ENCODE measurements at regions of chr9 and their contacts with region 1.

Region 1: DNA sequence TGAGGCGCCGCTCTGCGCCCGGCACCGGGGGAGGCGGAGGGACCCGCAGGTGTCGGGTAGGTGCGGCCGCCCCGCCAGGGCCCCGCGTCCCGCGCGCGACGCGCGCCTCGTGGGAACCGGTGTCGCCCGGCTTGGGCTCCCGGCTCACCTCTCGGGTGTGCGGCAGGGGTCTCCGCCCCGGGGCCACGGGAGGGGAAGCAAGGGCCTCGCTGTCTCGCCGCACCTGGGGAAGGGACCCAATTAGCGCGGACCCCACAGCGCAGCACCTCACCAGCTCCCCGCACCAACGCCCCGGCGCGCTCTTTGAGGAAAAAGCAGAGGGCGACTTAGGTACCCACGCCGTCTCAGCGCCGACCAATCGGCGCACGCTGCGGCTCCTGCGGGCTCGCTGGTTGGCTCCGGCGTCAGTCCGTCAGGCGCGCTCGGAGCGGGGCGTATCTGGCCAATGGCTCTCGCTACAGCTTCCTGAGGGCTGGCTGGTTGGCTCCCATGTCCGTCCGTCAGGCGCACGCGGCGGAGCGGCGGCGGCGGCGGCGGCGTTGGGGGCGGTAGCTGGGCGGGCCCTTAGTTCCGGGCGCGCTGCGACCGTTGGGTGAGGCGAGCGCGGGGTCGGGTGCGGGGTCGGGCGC is at the start of gene TRAF2:
- DNase-seq: peak; percentile 98
- H3K4me3 Mint-ChIP-seq: peak within 1 kb of the TSS; percentile 91
- H3K27ac Mint-ChIP-seq: peak within 1 kb of the TSS; percentile 81
- H3K4me1 Mint-ChIP-seq: peaks cover 52% of the 10 kb centered on the region
- H3K27me3 Mint-ChIP-seq: no peaks in the 10 kb centered on the region
- total RNA-seq, gene TRAF2: 43.6 to 45.7 TPM

Region 2: DNA sequence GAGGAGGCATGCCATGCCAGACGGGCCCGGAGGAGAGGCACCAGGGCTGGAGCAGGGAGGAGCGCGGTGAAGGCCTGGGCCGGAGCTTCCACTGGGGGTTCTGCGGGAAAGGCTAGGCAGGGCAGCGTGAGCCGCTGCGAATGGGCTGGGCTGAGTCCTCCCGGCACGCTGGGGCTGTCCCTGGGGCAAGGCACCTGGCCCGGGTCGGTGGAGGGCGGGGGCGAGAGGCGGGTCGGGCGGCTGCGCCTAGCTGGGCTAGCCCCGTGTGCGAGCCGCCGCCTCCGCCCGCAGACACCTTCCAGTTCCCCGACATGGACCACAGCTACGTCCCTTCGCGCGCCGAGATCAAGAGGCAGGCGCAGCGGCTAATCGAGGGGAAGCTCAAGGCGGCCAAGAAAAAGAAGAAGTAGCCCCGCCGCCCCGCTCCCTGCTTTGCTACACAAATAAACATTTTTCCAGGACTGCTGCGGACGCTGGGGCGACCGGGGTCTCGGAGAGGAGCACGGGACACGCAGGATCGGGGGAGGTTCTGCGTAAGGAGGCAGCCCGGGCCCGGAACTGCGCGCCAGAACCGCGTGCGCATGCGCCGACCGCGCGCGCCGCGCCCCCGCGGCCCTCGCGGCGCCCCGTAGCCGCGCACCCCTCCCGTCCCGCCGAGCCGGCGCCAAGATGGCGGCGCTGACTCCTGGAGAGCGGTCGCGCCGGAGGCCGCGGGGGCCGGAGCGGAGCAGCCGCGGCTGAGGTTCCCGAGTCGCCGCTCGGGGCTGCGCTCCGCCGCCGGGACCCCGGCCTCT is 78.6 kb before region 1 on chr9 and contains the start of gene RABL6:
- CTCF ChIA-PET with region 1: no interaction called
- POLR2A ChIA-PET with region 1: interaction called, 10 read pairs
- DNase-seq: peak; percentile 84
- H3K4me3 Mint-ChIP-seq: peak within 1 kb of the TSS; percentile 87
- H3K27ac Mint-ChIP-seq: peak within 1 kb of the TSS; percentile 76
- H3K4me1 Mint-ChIP-seq: peaks cover 37% of the 10 kb centered on the region
- H3K27me3 Mint-ChIP-seq: peaks cover under 1% of the 10 kb centered on the region
- total RNA-seq, gene RABL6: 96.0 to 96.2 TPM

Region 3: GRCh38 chr9:136849038-136849959 is 36.8 kb before region 1 on chr9 and contains the start of gene PHPT1:
- CTCF ChIA-PET with region 1: no interaction called
- POLR2A ChIA-PET with region 1: interaction called, 19 read pairs
- DNase-seq: peak; percentile 97
- H3K4me3 Mint-ChIP-seq: peak within 1 kb of the TSS; percentile 93
- H3K27ac Mint-ChIP-seq: peak within 1 kb of the TSS; percentile 85
- H3K4me1 Mint-ChIP-seq: peaks cover 21% of the 10 kb centered on the region
- H3K27me3 Mint-ChIP-seq: peaks cover 18% of the 10 kb centered on the region
- total RNA-seq, gene PHPT1: 82.3 to 85.4 TPM

Region 4: GRCh38 chr9:136865735-136866103 is 20.3 kb before region 1 on chr9:
- CTCF ChIA-PET with region 1: interaction called, 3 read pairs
- POLR2A ChIA-PET with region 1: interaction called, 10 read pairs
- DNase-seq: no peak
- H3K4me3 Mint-ChIP-seq: peak overlapping the region; percentile 86
- H3K27ac Mint-ChIP-seq: no peak overlapping the region
- H3K4me1 Mint-ChIP-seq: peaks cover 21% of the 10 kb centered on the region
- H3K27me3 Mint-ChIP-seq: no peaks in the 10 kb centered on the region

Region 5: GRCh38 chr9:136902259-136902821 is 16.3 kb after region 1 on chr9:
- CTCF ChIA-PET with region 1: interaction called, 5 read pairs
- POLR2A ChIA-PET with region 1: interaction called, 40 read pairs
- DNase-seq: peak; percentile 86
- H3K4me3 Mint-ChIP-seq: peak overlapping the region; percentile 52
- H3K27ac Mint-ChIP-seq: peak overlapping the region; percentile 92
- H3K4me1 Mint-ChIP-seq: peaks cover 48% of the 10 kb centered on the region
- H3K27me3 Mint-ChIP-seq: no peaks in the 10 kb centered on the region

Measured in activated CD4-positive, alpha-beta memory T cell treated with anti-CD3 and anti-CD28 coated beads, Interleukin-2, amount 10 ng/mL, durations not matched to agents 7 days and 5 days (primary cell).